CD4-positive, alpha-beta memory T cell (primary cell): ENCODE measurements at regions of chr13 and their contacts with region 1.

Region 1: DNA sequence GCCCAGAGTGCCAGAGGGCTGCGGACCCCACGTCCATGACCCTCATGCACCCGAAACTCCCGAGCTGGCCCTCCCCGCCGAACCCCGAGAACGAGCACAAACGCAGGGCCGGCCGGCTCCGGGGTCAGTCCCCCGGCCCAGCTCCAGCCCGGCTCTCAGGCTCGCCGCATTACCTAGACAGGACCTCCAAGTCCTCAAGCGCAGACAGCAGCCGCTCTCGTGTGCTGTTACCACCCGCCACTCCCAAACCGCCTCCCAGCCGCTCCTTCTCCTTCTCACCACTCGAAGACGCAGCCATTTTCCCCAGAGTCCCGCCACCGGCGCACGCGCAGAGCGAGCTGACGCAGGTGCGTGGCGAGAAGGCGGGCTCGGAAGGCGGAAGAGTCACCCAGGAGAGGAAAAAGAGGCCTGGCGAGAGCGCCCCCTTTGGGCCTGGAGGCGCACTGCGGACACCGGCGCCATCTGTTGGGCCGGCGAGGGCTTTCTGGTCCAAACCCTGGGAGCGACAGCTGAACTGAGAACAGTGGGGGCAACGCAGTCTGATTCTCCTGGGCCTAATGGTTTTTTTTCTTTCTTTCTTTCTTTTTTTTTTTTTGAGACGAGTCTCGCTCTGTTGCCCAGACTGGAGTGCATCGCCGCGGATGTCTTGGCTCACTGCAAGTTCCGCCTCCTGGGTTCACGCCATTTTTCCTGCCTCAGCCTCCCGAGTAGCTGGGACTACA is at the start of gene MED4:
- DNase-seq: peak; percentile 95 to 98 (median 97)
- H3K4me3 ChIP-seq: peak within 1 kb of the TSS; percentile 73 to 76
- H3K4me3 Mint-ChIP-seq: peak within 1 kb of the TSS; percentile 93 to 98 (median 96)
- H3K27ac ChIP-seq: peak within 1 kb of the TSS; percentile 96
- H3K27ac Mint-ChIP-seq: peak within 1 kb of the TSS; percentile 92 to 99 (median 98)
- H3K4me1 ChIP-seq: peaks cover 37% of the 10 kb centered on the region
- H3K4me1 Mint-ChIP-seq: peaks cover 24 to 54% (median 35%) of the 10 kb centered on the region in 4 donors
- H3K27me3 ChIP-seq: no peaks in the 10 kb centered on the region
- H3K27me3 Mint-ChIP-seq: peaks cover 0 to 2% of the 10 kb centered on the region in 2 donors
- total RNA-seq, gene MED4: 50.6 to 53.5 TPM

Region 2: DNA sequence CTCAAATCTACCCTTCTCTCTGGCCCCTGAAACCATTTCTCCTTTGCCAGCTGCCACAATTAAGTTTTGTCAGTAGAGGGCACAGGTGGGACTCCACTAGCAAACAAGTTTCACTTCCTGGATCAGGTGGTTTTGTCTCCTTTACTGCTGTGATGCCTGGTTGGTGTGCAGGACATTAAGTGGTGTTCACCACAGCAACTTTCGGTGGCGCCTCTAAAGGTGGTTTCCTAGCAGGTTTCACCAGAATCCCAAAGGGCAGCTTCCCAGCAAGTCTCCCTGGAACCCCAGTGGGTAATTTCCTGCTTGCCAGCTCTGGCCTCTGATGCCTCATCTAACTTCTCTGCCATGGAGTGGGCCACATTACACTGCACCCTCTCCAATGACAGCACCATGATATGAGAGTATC is 16.7 kb before region 1 on chr13:
- CTCF ChIA-PET with region 1: interaction called, 12 read pairs
- POLR2A ChIA-PET with region 1: interaction called, 6 read pairs
- intact Hi-C with region 1: no loop called
- DNase-seq: peak in 3 of 5 donors; percentile 11 to 18 (median 17)
- H3K4me3 ChIP-seq: no peak overlapping the region
- H3K4me3 Mint-ChIP-seq: no peak overlapping the region
- H3K27ac ChIP-seq: no peak overlapping the region
- H3K27ac Mint-ChIP-seq: no peak overlapping the region
- H3K4me1 ChIP-seq: no peaks in the 10 kb centered on the region
- H3K4me1 Mint-ChIP-seq: peaks cover 0 to 8% (median 0%) of the 10 kb centered on the region in 4 donors
- H3K27me3 ChIP-seq: no peaks in the 10 kb centered on the region
- H3K27me3 Mint-ChIP-seq: no peaks in the 10 kb centered on the region

Region 3: GRCh38 chr13:48303359-48304142 is 208.6 kb after region 1 on chr13 and contains the start of gene RB1:
- CTCF ChIA-PET with region 1: interaction called, 4 read pairs
- POLR2A ChIA-PET with region 1: interaction called, 7 read pairs
- intact Hi-C with region 1: loop called (anchors 1 kb)
- DNase-seq: peak; percentile 91 to 93 (median 92)
- H3K4me3 ChIP-seq: peak within 1 kb of the TSS; percentile 76 to 94
- H3K4me3 Mint-ChIP-seq: peak within 1 kb of the TSS; percentile 95 to 99 (median 97)
- H3K27ac ChIP-seq: peak within 1 kb of the TSS; percentile 96
- H3K27ac Mint-ChIP-seq: peak within 1 kb of the TSS; percentile 98 to 100 (median 99)
- H3K4me1 ChIP-seq: peaks cover 38% of the 10 kb centered on the region
- H3K4me1 Mint-ChIP-seq: peaks cover 21 to 41% (median 29%) of the 10 kb centered on the region in 4 donors
- H3K27me3 ChIP-seq: no peaks in the 10 kb centered on the region
- H3K27me3 Mint-ChIP-seq: no peaks in the 10 kb centered on the region
- total RNA-seq, gene RB1: 20.0 to 26.0 TPM

Region 4: DNA sequence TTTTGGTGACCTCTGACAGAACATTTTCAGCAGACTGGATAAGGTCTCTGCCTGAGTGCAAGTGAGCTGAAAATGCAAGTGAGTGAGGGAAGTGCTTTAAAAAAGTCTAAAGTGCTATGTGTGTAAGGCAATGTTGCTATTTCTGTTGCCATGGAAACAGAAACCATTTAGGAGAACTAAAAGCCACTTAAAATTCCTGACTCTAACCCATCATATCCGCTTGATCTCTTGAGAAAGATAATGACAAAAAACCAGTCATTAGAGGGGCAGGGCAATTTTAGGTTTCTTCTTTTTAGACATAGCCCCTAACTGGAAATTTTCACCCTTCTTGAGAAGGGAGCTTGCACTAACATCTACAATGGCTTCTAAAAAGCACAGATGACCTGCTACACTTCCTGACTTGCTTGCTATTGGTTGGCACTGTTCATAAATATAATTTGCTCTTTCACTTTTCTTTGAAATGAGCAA is 558.6 kb after region 1 on chr13 and contains the start of gene CYSLTR2:
- CTCF ChIA-PET with region 1: interaction called, 3 read pairs
- POLR2A ChIA-PET with region 1: interaction called, 3 read pairs
- intact Hi-C with region 1: loop called (anchors 1 kb)
- DNase-seq: peak; percentile 69 to 89 (median 86)
- H3K4me3 ChIP-seq: peak within 1 kb of the TSS; percentile 30 to 55
- H3K4me3 Mint-ChIP-seq: peak within 1 kb of the TSS; percentile 81 to 90 (median 89)
- H3K27ac ChIP-seq: peak within 1 kb of the TSS; percentile 69
- H3K27ac Mint-ChIP-seq: peak within 1 kb of the TSS; percentile 88 to 98 (median 95)
- H3K4me1 ChIP-seq: peaks cover 51% of the 10 kb centered on the region
- H3K4me1 Mint-ChIP-seq: peaks cover 27 to 53% (median 43%) of the 10 kb centered on the region in 4 donors
- H3K27me3 ChIP-seq: no peaks in the 10 kb centered on the region
- H3K27me3 Mint-ChIP-seq: no peaks in the 10 kb centered on the region
- total RNA-seq, gene CYSLTR2: 3.3 to 3.7 TPM